ENCODE measurements at regions of chr5 and their contacts with region 1.

Region 1: GRCh38 chr5:171387345-171387969 is at the start of gene NPM1:
- DNase-seq: peak; percentile 98 to 100 (median 99)
- ATAC-seq: peak; percentile 89
- H3K4me3 ChIP-seq: peak within 1 kb of the TSS; percentile 93
- H3K27ac ChIP-seq: peak within 1 kb of the TSS; percentile 93
- H3K4me1 ChIP-seq: peaks cover 9 to 11% of the 10 kb centered on the region in 2 experiments; a peak in 4 of 5 replicates
- H3K27me3 ChIP-seq: no peaks in the 10 kb centered on the region
- CTCF ChIP-seq: no peak
- EP300 ChIP-seq: no peak
- POLR2A ChIP-seq: peak; percentile 100
- RAD21 ChIP-seq: no peak
- polyA plus RNA-seq, gene NPM1: 4,099 to 6,909 TPM

Region 2: DNA sequence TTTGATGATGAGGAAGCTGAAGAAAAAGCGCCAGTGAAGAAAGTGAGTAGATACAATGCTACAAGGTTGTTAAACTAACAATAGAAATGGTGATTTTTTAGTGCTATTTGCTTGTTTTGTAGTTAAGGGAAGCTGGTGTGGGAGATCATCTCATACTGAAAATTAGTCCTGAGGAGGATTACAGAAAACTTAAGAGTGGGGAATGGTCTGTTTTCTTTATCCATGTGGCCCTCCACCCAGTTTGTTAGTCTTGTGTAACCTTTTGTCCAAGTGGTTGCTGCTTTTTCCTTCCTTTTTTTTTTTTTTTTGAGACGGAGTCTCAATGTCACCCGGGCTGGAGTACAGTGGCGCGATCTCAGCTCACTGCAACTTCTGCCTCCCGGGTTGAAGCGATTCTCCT is 12.7 kb after region 1 on chr5:
- CTCF ChIA-PET with region 1: no interaction called
- POLR2A ChIA-PET with region 1: interaction called, 17 read pairs
- in situ Hi-C with region 1: no loop called
- intact Hi-C with region 1: no loop called
- DNase-seq: no peak
- ATAC-seq: no peak
- H3K4me3 ChIP-seq: no peak overlapping the region
- H3K27ac ChIP-seq: no peak overlapping the region
- H3K4me1 ChIP-seq: peaks cover 3 to 7% of the 10 kb centered on the region in 2 experiments; a peak in 1 of 5 replicates
- H3K27me3 ChIP-seq: no peaks in the 10 kb centered on the region
- CTCF ChIP-seq: no peak
- EP300 ChIP-seq: no peak
- POLR2A ChIP-seq: no peak
- RAD21 ChIP-seq: no peak

Region 3: GRCh38 chr5:171409164-171410136 is 22.0 kb after region 1 on chr5:
- CTCF ChIA-PET with region 1: no interaction called
- POLR2A ChIA-PET with region 1: interaction called, 12 read pairs
- in situ Hi-C with region 1: no loop called
- intact Hi-C with region 1: loop called (anchors 2 kb)
- DNase-seq: peak in 1 of 4 experiments; percentile 29
- ATAC-seq: peak; percentile 29
- H3K4me3 ChIP-seq: no peak overlapping the region
- H3K27ac ChIP-seq: peak overlapping the region; percentile 54; the same call in 2 of the 3 replicates
- H3K4me1 ChIP-seq: peaks cover 0 to 13% of the 10 kb centered on the region in 2 experiments; a peak in 2 of 5 replicates
- H3K27me3 ChIP-seq: no peaks in the 10 kb centered on the region
- CTCF ChIP-seq: no peak
- EP300 ChIP-seq: peak; percentile 74; the same call in 1 of the 2 replicates
- POLR2A ChIP-seq: peak; percentile 64
- RAD21 ChIP-seq: no peak

Region 4: DNA sequence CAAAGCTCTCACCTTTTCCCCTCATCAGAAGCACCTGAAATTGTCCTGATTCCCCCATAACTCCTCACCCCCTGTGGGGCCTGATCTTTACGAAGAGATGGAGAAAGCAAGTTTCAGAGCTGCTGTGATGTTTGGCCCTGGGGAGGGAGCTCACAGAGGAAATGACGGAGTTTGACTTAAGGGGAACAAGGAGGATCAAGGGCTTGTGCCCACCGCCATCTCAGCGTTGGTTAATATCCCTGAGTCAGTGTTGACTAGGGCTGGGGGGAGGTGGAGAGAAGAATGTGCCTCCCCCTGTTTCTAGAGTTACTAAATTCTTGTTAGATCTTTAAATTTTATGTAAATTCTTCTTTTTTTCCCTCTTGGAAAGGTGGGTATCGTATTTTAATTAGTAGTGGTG is 59.8 kb after region 1 on chr5:
- CTCF ChIA-PET with region 1: no interaction called
- POLR2A ChIA-PET with region 1: interaction called, 12 read pairs
- in situ Hi-C with region 1: no loop called
- intact Hi-C with region 1: no loop called
- DNase-seq: no peak
- ATAC-seq: no peak
- H3K4me3 ChIP-seq: no peak overlapping the region
- H3K27ac ChIP-seq: no peak overlapping the region
- H3K4me1 ChIP-seq: peaks cover 7 to 13% of the 10 kb centered on the region in 2 experiments; a peak in 4 of 5 replicates
- H3K27me3 ChIP-seq: peaks cover 6 to 61% of the 10 kb centered on the region in 2 experiments; a peak in 4 of 5 replicates
- CTCF ChIP-seq: no peak
- EP300 ChIP-seq: no peak
- POLR2A ChIP-seq: no peak
- RAD21 ChIP-seq: no peak

Region 5: DNA sequence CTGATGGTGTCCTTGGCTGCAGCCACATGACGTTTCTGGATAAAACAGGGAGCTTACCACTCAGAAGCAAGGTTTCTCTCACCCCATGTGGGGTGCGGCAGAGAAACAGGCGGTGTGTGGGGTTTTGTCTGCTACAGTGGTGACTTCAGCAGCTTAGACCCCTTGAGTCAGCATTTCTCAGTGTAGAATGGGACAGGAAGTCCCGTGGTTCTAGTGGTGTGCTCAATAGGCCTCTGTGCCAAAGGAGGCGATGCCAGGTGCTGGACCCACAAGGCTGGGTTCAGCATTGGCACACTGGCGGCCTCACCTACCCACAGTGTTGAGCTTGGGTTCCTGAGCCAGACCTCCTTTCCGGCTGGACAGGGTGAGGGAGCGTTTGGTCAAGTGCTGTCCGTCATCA is 273.0 kb after region 1 on chr5:
- CTCF ChIA-PET with region 1: no interaction called
- POLR2A ChIA-PET with region 1: no interaction called
- in situ Hi-C with region 1: no loop called
- intact Hi-C with region 1: no loop called
- DNase-seq: no peak
- ATAC-seq: no peak
- H3K4me3 ChIP-seq: no peak overlapping the region
- H3K27ac ChIP-seq: no peak overlapping the region
- H3K4me1 ChIP-seq: no peaks in the 10 kb centered on the region
- H3K27me3 ChIP-seq: peaks cover 2 to 19% of the 10 kb centered on the region in 2 experiments; a peak in 3 of 5 replicates
- CTCF ChIP-seq: no peak
- EP300 ChIP-seq: no peak
- POLR2A ChIP-seq: no peak
- RAD21 ChIP-seq: no peak

Region 6: DNA sequence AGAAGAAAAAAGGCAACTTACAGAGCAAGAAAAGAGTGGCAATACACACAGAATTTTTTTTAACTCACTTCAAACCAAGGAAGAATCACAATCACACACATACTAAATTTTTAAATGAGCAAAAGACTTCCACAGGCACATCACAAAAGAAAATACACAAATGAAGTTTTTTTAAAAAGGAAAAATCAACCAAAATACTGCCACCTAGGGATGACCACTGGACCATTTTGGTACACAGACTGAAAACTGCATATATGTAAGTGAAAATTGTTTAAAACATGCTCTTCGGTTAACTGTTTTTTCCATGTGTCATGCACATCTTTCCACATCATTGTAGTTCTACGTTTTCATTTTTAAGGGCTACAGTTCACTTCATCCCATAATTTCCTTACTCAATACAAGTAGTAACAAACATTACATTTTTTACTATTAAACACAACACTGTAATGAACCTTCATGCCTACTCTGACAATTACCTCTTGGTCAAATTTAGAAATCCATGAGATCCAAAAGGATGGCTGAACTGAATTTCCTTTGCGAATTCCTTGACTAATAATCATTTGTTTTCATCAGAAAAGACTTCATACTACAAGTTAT is 540.0 kb after region 1 on chr5:
- CTCF ChIA-PET with region 1: no interaction called
- POLR2A ChIA-PET with region 1: no interaction called
- in situ Hi-C with region 1: no loop called
- intact Hi-C with region 1: no loop called
- DNase-seq: peak in 1 of 4 experiments; percentile 10
- ATAC-seq: no peak
- H3K4me3 ChIP-seq: no peak overlapping the region
- H3K27ac ChIP-seq: no peak overlapping the region
- H3K4me1 ChIP-seq: no peaks in the 10 kb centered on the region
- H3K27me3 ChIP-seq: no peaks in the 10 kb centered on the region
- CTCF ChIP-seq: peak in 2 of 3 experiments; percentile 45 to 48; a peak in 4 of 6 replicates
- EP300 ChIP-seq: no peak
- POLR2A ChIP-seq: no peak
- RAD21 ChIP-seq: 0 out of 4 replicates have a peak, but pooled peaks of 1 of the 2 experiments have one; percentile 7

Measured in K562 (cell line).